A549 (cell line): ENCODE measurements at regions of chr6 and their contacts with region 1.

Region 1: DNA sequence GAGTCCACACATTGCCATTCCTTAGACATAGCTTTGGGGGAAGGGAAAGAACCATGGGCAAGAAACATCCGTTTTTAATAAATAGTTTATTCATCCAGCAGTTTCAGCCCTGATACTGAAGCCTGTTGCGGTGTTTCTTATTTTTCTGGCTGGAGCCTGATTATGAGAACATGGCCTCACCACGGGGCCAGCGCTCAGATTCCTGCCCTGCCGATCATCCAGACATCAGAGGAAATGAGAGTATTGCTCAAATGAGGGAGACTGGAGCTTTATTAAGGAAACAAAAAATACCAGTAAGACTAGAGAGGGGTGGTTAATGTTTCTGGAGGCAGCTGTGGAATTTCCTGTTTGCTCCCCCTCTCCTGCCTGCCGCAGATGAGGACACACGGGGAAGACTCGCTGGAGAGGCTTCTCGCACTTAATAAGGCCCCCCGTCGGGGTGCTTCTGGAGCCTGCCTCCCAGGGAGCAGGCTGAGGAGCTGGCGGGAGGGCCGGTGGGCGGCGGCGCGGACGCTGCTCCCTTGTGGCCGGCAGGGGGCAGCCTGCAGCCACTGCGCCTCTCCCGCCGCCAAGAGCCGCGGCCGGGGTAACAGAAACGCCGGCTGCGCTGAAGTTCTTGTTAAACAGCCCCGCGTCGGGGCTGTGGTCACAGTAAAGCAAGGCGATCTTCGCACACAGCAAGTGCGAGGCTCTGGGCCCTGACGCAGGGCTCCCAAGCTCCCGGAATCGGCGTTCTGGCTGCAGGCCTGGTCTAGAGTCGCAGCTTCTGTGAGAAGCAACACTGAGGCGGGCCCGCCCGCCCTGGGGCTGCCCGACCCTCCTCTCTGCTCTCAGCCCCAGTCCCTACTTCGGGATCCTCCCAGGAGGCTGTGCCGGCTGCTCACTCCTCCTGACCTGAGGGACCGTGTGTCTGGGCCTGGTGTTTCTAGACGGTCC is 17.5 kb downstream of the LEMD2 start:
- DNase-seq: peak; percentile 49 to 69
- ATAC-seq: peak; percentile 76 to 83
- H3K4me3 ChIP-seq: no peak overlapping the region
- H3K27ac ChIP-seq: peak overlapping the region; percentile 41 to 80; a peak in 4 of 6 replicates
- H3K4me1 ChIP-seq: peaks cover 22% of the 10 kb centered on the region
- CTCF ChIP-seq: peak; percentile 85
- EP300 ChIP-seq: no peak
- POLR2A ChIP-seq: no peak
- RAD21 ChIP-seq: peak; percentile 67 to 87

Region 2: DNA sequence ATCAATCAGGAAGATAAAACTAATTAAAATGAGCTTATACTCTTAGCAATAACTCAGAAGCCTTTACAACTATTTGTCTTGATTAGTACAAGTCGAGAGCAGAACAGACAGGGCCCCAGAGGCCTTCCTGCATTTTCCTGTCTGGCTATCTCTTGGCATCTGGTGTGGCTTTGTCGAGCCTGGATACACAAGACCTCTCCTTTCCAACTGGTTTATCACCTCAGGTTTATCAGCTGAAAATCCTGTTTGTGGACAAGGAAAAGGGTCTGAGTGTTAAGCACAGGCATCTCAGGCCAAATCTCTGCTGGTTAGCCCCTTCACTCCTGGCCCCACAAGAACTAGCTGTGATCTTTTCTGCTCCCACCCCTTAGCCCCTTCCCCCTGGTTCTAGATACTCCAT is 223.9 kb before region 1 on chr6:
- CTCF ChIA-PET with region 1: no interaction called
- POLR2A ChIA-PET with region 1: no interaction called
- DNase-seq: no peak
- ATAC-seq: no peak
- H3K4me3 ChIP-seq: no peak overlapping the region
- H3K27ac ChIP-seq: no peak overlapping the region
- H3K4me1 ChIP-seq: no peaks in the 10 kb centered on the region
- CTCF ChIP-seq: no peak
- EP300 ChIP-seq: no peak
- POLR2A ChIP-seq: no peak
- RAD21 ChIP-seq: no peak

Region 3: DNA sequence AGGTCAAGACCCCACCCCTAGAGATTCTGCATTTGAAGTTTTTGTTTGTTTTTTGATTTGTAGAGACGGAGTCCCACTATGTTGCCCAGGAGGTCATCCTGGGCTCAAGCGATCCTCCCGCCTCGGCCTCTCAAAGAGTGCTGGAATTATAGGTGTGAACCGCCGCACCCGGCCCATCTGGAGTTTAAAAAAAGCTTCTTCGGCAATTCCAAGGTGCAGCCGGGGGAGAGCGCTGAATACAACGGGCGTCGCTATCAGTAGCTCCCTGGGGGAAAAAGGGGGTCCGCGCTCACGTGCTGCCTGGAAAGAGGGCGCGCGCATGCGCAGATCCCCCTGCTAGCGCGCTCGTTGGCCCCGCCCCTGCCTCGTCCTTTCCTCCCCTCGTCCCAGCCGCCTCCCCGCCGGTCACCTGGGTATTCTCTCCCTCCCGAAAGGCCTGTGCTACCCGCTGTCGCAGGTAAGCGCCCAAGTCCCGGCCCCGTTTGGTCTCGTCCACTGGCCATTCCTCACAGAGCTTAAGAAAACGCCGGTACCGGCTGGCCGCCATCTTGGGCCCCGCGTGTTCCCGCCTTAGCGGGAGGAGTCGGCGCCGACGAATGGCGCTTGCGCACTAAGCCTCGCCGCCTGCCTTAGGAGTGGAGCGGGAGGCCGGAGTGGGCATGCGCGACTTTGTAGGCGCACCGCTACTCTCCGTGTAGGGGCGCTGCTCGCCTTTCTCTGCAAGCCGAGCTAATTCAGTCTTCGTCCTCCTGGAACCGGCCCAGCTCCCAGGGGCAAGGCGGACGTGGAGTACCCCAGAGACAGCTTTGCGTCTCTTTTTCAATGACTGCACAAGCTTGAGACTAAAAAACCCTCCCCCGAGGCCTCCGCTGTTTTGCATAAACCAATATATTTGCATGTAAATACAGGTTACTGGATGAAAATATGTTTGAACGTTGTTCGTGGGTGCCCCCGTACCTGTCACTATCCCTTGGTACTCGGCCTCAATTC is 60.0 kb before region 1 on chr6 and contains the start of gene UQCC2:
- CTCF ChIA-PET with region 1: interaction called, 15 read pairs
- POLR2A ChIA-PET with region 1: interaction called, 3 read pairs
- DNase-seq: peak; percentile 87 to 95
- ATAC-seq: peak; percentile 88 to 97
- H3K4me3 ChIP-seq: peak within 1 kb of the TSS; percentile 73
- H3K27ac ChIP-seq: peak within 1 kb of the TSS; percentile 98 to 99
- H3K4me1 ChIP-seq: peaks cover 10% of the 10 kb centered on the region; the same call in 2 of the 3 replicates
- CTCF ChIP-seq: peak; percentile 64
- EP300 ChIP-seq: no peak
- POLR2A ChIP-seq: peak; percentile 50
- RAD21 ChIP-seq: peak; percentile 70
- polyA plus RNA-seq, gene UQCC2: 65.5 and 90.8 TPM in 2 replicates

Region 4: DNA sequence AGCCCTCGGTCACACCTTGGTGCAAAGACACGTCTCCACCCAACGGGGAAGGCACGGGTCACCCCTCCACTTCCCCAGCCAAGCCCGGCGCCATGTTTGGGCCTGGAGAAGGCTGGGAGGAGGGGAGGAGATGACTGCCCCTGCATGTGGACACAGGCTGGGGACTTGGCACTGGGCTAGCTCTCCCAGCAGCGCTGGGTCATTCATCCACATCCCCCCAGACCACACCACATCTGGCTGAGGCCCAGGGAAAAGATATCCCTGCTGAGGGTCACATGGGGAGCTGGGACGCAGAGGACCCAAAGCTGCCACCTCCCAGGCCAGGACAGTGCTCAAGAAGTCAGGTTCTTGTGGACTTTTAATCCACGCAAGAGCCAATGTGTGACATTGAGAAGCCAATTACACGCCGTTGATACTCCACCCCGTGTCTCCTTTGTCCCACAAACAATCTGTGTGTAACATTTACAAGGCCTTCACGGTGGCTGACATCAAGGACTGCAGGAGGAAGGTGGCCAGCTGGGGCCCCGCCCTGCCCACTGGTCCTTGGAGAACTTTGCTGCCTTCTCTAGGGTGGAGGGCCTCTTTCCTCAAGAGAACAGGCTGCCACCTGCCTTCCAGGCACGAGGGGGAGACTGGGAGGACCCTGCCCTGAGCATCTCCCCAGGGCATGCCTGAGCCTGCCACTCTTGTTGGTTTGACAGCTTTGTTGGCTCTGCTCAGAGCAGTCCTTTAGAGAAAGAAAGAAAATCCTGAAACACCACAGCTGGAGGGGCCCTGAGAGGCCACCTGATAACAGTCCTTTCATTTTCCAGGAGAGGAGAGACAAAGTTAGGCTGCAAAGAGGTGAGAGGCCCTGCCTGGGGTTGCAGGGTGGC is 19.4 kb before region 1 on chr6:
- CTCF ChIA-PET with region 1: interaction called, 80 read pairs
- POLR2A ChIA-PET with region 1: no interaction called
- DNase-seq: no peak
- ATAC-seq: no peak
- H3K4me3 ChIP-seq: no peak overlapping the region
- H3K27ac ChIP-seq: peak overlapping the region in 1 of 2 experiments; percentile 19; a peak in 2 of 6 replicates
- H3K4me1 ChIP-seq: peaks cover under 1% of the 10 kb centered on the region; the same call in 1 of the 3 replicates
- CTCF ChIP-seq: no peak
- EP300 ChIP-seq: no peak
- POLR2A ChIP-seq: no peak
- RAD21 ChIP-seq: no peak

Region 5: GRCh38 chr6:33840048-33840926 is 68.9 kb after region 1 on chr6:
- CTCF ChIA-PET with region 1: interaction called, 27 read pairs
- POLR2A ChIA-PET with region 1: no interaction called
- DNase-seq: peak; percentile 88 to 95
- ATAC-seq: peak; percentile 92 to 94
- H3K4me3 ChIP-seq: peak overlapping the region; percentile 3; the same call in 2 of the 3 replicates
- H3K27ac ChIP-seq: peak overlapping the region; percentile 86 to 97
- H3K4me1 ChIP-seq: peaks cover 52% of the 10 kb centered on the region
- CTCF ChIP-seq: no peak
- EP300 ChIP-seq: peak; percentile 29 to 81; a peak in 2 of 5 replicates
- POLR2A ChIP-seq: peak; percentile 26; the same call in 1 of the 2 replicates
- RAD21 ChIP-seq: no peak; a peak in 2 of 5 replicates

Region 6: GRCh38 chr6:34027445-34027936 is 256.1 kb after region 1 on chr6:
- CTCF ChIA-PET with region 1: interaction called, 123 read pairs
- POLR2A ChIA-PET with region 1: no interaction called
- DNase-seq: peak; percentile 24 to 68
- ATAC-seq: peak; percentile 84 to 94
- H3K4me3 ChIP-seq: no peak overlapping the region
- H3K27ac ChIP-seq: peak overlapping the region in 1 of 2 experiments; percentile 60; a peak in 2 of 6 replicates
- H3K4me1 ChIP-seq: no peaks in the 10 kb centered on the region
- CTCF ChIP-seq: peak; percentile 63
- EP300 ChIP-seq: no peak
- POLR2A ChIP-seq: no peak
- RAD21 ChIP-seq: peak; percentile 77 to 87

Region 7: GRCh38 chr6:34145161-34146020 is 374.0 kb after region 1 on chr6:
- CTCF ChIA-PET with region 1: interaction called, 13 read pairs
- POLR2A ChIA-PET with region 1: interaction called, 3 read pairs
- DNase-seq: peak in 1 of 2 experiments; percentile 37
- ATAC-seq: peak; percentile 73 to 75
- H3K4me3 ChIP-seq: peak overlapping the region; percentile 48
- H3K27ac ChIP-seq: peak overlapping the region in 1 of 2 experiments; percentile 68; a peak in 3 of 6 replicates
- H3K4me1 ChIP-seq: peaks cover 10% of the 10 kb centered on the region; the same call in 1 of the 3 replicates
- CTCF ChIP-seq: no peak
- EP300 ChIP-seq: no peak
- POLR2A ChIP-seq: no peak
- RAD21 ChIP-seq: no peak